CD14-positive monocyte (primary cell): ENCODE measurements at regions of chr15 and their contacts with region 1.

Region 1: DNA sequence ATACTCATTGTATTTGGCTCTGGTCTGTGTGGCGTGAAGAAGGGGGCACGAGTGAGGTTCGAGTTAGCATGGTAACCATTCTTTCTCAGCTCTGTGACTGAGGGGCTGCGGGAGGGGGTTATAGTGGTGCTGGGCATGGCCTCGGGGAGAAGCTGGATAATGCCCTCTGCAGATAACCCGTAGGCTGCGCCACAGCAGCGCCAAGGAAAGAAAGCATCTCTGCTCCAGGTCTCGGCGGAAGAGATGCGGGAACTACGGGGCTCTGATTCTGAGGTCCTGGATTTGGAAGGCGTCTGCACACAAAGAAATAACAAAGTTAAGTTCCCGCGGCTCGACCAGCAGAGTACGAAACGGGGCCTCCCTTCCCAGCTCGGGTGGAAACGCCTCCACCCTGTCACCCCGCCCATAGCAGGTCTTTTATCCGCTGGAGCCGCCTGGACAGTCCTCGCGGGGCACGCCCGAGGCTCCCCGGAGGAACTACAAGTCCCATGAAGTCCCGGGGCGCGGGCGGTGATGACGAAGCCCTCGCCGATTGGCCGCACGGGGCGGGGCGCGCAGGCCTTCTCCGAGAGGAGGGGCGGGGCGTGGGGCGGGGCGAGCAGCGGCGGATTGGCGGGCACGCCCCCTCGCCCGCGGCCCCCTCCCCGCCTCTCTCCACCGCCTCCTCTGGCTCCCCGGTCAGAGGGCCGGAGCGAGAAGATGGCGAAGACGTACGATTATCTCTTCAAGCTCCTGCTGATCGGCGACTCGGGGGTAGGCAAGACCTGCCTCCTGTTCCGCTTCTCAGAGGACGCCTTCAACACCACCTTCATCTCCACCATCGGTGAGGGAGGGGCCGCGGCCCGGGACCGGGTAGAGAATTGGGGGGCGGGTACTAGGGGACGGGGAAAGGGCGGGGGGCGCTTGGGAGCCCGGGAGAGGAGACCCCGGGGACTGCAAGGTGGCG is at the start of gene RAB8B:
- DNase-seq: peak; percentile 93 to 95 (median 94)
- H3K4me3 ChIP-seq: peak within 1 kb of the TSS; percentile 93 to 99 (median 96)
- H3K4me3 Mint-ChIP-seq: peak within 1 kb of the TSS; percentile 96 to 100
- H3K27ac ChIP-seq: peak within 1 kb of the TSS; percentile 92 to 93
- H3K27ac Mint-ChIP-seq: peak within 1 kb of the TSS; percentile 93 to 100 (median 96)
- H3K4me1 ChIP-seq: peaks cover 42 to 49% of the 10 kb centered on the region in 2 donors
- H3K4me1 Mint-ChIP-seq: peaks cover 47% of the 10 kb centered on the region
- H3K27me3 ChIP-seq: no peaks in the 10 kb centered on the region
- H3K27me3 Mint-ChIP-seq: peaks cover 0 to 3% (median 2%) of the 10 kb centered on the region in 3 donors
- CTCF ChIP-seq: no peak
- polyA plus RNA-seq, gene RAB8B: 22.0 to 77.3 (median 58.9) TPM

Region 2: DNA sequence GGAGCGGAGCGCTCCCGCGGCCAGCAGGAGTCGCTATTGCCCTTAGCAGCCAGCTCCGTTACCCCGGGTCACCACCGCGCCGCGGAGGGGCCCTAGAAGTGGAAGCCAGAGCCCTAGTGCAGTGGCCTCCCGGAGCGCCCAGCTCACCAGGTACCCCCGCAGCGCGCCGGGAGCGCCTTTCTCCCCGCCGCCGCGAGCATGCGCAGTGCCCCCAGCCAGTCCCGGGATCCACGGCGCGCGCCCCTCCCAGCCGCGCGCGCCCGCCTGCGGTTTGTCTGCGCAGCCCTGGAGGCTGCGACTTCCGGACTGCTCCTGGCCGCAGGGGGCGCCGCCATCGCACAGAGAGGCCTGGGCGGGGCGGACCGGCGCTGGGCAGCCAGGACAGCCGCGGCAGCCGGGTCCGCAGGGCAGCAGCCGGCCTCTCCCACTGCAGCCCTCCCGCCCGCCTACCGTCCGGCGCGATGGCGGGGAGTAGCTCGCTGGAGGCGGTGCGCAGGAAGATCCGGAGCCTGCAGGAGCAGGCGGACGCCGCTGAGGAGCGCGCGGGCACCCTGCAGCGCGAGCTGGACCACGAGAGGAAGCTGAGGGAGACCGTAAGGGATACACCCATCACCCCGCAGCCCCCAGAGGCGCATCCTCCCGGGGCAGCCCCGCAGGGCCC is 141.0 kb before region 1 on chr15:
- intact Hi-C with region 1: loop called in 1 of 2 experiments (anchors 10 kb)
- DNase-seq: peak; percentile 77 to 84 (median 82)
- H3K4me3 ChIP-seq: peak overlapping the region; percentile 62 to 86 (median 74)
- H3K4me3 Mint-ChIP-seq: peak overlapping the region; percentile 92 to 99
- H3K27ac ChIP-seq: peak overlapping the region; percentile 31 to 66
- H3K27ac Mint-ChIP-seq: peak overlapping the region in 5 of 7 donors; percentile 53 to 85 (median 75)
- H3K4me1 ChIP-seq: peaks cover 25 to 30% of the 10 kb centered on the region in 2 donors
- H3K4me1 Mint-ChIP-seq: peaks cover 30% of the 10 kb centered on the region
- H3K27me3 ChIP-seq: peaks cover 42 to 57% of the 10 kb centered on the region in 2 donors
- H3K27me3 Mint-ChIP-seq: peaks cover 46 to 64% (median 54%) of the 10 kb centered on the region in 3 donors
- CTCF ChIP-seq: peak; percentile 97

Region 3: GRCh38 chr15:63135804-63136203 is 53.4 kb before region 1 on chr15:
- intact Hi-C with region 1: loop called in 1 of 2 experiments (anchors 5 kb)
- DNase-seq: peak; percentile 90 to 95 (median 93)
- H3K4me3 ChIP-seq: peak overlapping the region in 1 of 3 experiments; percentile 22
- H3K4me3 Mint-ChIP-seq: peak overlapping the region in 1 of 2 donors; percentile 63
- H3K27ac ChIP-seq: peak overlapping the region; percentile 99 to 100
- H3K27ac Mint-ChIP-seq: peak overlapping the region; percentile 96 to 99 (median 98)
- H3K4me1 ChIP-seq: peaks cover 21 to 27% of the 10 kb centered on the region in 2 donors
- H3K4me1 Mint-ChIP-seq: peaks cover 28% of the 10 kb centered on the region
- H3K27me3 ChIP-seq: no peaks in the 10 kb centered on the region
- H3K27me3 Mint-ChIP-seq: no peaks in the 10 kb centered on the region
- CTCF ChIP-seq: no peak

Region 4: DNA sequence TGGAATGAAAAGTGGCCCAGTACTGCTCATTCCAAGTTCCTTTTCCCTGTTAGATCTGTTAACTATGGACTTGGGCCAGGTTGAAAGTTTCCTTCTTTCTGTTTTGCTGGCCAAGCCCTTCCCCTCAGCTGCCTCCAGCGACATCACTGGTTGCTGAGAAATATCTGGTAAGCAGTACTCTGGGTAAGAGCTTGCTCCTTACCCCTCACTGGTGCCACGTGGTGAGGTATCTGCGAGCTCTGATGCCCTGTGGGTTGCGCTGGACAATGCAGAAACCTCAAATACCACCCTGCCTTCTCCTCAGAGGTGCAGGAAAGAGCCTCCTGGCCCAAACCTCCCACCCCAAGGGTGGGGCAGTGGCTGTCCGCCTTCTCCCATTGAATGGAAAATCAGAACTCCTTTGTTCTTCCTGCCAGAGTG is 45.3 kb after region 1 on chr15:
- intact Hi-C with region 1: loop called (anchors 5 kb)
- DNase-seq: no peak
- H3K4me3 ChIP-seq: peak overlapping the region in 1 of 3 experiments; percentile 36
- H3K4me3 Mint-ChIP-seq: peak overlapping the region in 1 of 2 donors; percentile 51
- H3K27ac ChIP-seq: peak overlapping the region; percentile 66 to 87
- H3K27ac Mint-ChIP-seq: peak overlapping the region; percentile 79 to 94 (median 92)
- H3K4me1 ChIP-seq: peaks cover 73 to 90% of the 10 kb centered on the region in 2 donors
- H3K4me1 Mint-ChIP-seq: peaks cover 75% of the 10 kb centered on the region
- H3K27me3 ChIP-seq: no peaks in the 10 kb centered on the region
- H3K27me3 Mint-ChIP-seq: no peaks in the 10 kb centered on the region
- CTCF ChIP-seq: no peak

Region 5: DNA sequence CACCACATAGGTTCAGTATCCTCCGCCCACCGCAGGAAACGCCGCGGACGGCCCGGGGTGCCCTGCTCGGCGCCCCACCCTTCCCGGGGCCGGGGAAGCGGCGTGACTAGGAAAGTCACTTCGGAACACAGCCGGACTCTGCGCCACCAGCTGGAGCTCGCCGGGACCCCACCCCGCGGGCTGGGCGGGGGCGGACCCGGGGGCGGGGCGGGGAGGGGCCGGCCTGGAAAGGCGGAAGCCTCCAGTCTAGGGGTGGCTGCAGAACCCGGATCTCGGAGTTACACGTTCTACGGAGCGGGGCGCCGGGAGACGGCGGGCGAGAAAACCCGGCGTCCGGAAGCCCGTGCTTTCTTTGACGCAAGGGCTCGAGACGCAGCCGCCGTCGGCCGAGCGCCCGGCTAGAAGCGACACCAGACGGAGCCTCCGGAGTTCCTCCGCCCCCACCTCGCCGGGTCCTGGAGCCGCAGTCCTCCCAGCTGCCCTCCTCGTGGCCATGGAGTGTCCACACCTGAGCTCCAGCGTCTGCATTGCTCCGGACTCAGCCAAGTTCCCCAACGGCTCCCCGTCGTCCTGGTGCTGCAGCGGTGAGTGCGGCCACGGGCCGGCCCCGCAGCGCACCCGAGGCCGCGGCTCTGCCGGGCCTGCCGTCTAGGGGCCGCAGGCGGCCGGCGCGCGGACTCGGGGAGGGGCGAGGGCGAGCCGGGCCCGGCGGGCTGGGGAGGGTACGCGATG is 315.2 kb after region 1 on chr15 and contains the start of gene USP3:
- intact Hi-C with region 1: loop called in 1 of 2 experiments (anchors 10 kb)
- DNase-seq: peak; percentile 93 to 95 (median 94)
- H3K4me3 ChIP-seq: peak within 1 kb of the TSS; percentile 92 to 96 (median 94)
- H3K4me3 Mint-ChIP-seq: peak within 1 kb of the TSS; percentile 96
- H3K27ac ChIP-seq: peak within 1 kb of the TSS; percentile 98 to 100
- H3K27ac Mint-ChIP-seq: peak within 1 kb of the TSS; percentile 90 to 96 (median 93)
- H3K4me1 ChIP-seq: peaks cover 76 to 83% of the 10 kb centered on the region in 2 donors
- H3K4me1 Mint-ChIP-seq: peaks cover 71% of the 10 kb centered on the region
- H3K27me3 ChIP-seq: no peaks in the 10 kb centered on the region
- H3K27me3 Mint-ChIP-seq: peaks cover 0 to 4% (median 0%) of the 10 kb centered on the region in 3 donors
- CTCF ChIP-seq: peak; percentile 53
- polyA plus RNA-seq, gene USP3: 91.4 to 167 (median 122) TPM